GM10248 (cell line): ENCODE measurements at regions of chr12 and their contacts with region 1.

Region 1: GRCh38 chr12:8644345-8645248 is 18.0 kb downstream of the MFAP5 start:
- DNase-seq: peak; percentile 63
- CTCF ChIP-seq: no peak

Region 2: DNA sequence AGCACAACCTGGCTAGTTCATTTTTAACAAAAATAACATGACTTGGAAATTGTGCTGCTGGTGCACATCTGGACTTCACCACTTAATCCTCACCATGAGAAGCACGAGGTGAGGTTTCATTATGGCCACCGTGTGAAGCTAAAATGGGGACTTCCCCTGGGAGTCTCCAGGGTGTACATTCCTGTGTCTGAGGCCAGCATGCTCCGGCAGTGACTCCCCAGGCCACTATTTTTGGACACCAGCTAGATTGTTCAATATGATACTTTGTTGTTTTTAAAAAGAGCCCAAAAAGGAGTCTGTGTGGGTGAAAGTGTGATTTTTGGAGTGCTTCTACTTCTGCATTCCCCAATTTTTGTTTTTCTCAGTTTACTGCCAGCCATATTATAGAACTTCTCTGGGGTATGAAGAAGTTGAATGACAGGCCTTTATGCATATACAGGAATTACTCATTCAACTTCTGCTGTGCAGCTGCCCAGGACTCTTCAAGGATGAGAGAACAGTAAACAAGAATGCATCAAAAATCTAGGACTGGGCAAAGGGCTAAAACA is 15.0 kb before region 1 on chr12:
- CTCF ChIA-PET with region 1: interaction called, 16 read pairs
- POLR2A ChIA-PET with region 1: interaction called, 11 read pairs
- DNase-seq: peak; percentile 68
- CTCF ChIP-seq: no peak

Region 3: GRCh38 chr12:8662593-8662992 is 18.0 kb after region 1 on chr12 and contains the start of gene MFAP5:
- CTCF ChIA-PET with region 1: interaction called, 17 read pairs
- POLR2A ChIA-PET with region 1: no interaction called
- DNase-seq: no peak
- CTCF ChIP-seq: no peak